Endothelial cell of umbilical vein (primary cell): ENCODE measurements at regions of chr1 and their contacts with region 1.

Region 1: DNA sequence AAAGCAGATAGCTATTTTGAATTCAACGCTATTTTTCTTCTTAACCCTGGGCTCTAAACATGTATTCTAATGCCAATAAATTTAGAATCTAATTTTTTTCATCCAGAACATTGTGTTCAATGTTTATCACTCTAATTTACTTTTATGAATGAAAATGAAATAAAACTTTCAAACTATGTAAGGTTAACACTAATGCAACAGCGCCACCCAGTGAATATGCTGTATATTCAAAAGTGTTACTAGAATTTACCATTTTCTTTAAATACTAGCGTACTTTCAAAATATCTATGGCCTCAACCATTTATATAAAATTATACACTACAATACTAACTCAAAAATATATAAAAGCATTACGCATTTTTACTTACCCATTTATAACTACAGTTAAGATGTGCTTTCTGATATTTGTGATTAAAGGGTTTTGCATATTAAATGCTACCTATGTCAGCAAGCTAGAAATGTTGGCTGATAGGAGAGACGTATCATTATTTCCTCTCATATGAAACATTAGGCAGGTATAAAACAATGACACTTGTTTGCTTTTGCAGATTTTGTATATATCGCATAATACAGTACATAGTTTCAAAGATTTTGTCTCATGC is 5.9 kb upstream of the NUF2 start:
- DNase-seq: peak; percentile 63
- H3K4me3 ChIP-seq: no peak overlapping the region
- H3K27ac ChIP-seq: no peak overlapping the region
- H3K4me1 ChIP-seq: peaks cover 6% of the 10 kb centered on the region
- H3K27me3 ChIP-seq: no peaks in the 10 kb centered on the region
- CTCF ChIP-seq: peak; percentile 15 to 28
- POLR2A ChIP-seq: no peak

Region 2: DNA sequence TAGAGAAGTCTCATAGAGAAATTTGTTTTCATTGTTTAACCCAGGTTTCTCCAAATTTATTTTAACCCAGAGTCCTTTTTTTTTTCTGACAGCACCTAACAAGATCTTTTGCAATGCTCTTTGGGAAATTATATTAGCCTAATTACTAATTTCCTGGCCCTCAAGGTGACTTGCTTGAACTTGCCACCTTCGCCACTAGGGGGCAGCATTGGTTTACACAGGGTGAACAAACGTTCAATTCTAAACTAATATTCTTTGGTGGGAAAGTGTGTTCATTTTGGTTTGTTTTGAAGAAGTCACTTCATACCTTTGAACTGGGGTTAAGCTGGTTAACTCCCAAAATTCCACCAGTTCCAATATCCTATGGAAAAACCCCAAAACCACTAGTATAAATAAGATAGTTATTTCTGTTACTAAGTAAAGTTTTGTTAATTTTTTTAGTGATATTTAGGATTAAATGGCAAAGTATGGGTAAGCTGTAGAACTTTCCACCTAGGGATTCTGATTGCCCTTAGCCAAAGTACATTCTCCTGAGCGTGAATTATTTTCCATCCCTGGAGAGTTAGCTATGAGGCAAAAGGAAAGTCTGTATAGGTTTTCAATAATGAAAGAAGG is 467.9 kb before region 1 on chr1:
- CTCF ChIA-PET with region 1: interaction called, 129 read pairs
- POLR2A ChIA-PET with region 1: no interaction called
- dilution Hi-C with region 1: no loop called
- intact Hi-C with region 1: loop called (anchors 1 kb)
- DNase-seq: peak; percentile 78
- H3K4me3 ChIP-seq: no peak overlapping the region
- H3K27ac ChIP-seq: no peak overlapping the region
- H3K4me1 ChIP-seq: no peaks in the 10 kb centered on the region
- H3K27me3 ChIP-seq: no peaks in the 10 kb centered on the region
- CTCF ChIP-seq: peak; percentile 78 to 82
- POLR2A ChIP-seq: no peak

Region 3: GRCh38 chr1:162878000-162878596 is 437.8 kb before region 1 on chr1:
- CTCF ChIA-PET with region 1: interaction called, 102 read pairs
- POLR2A ChIA-PET with region 1: no interaction called
- dilution Hi-C with region 1: no loop called
- intact Hi-C with region 1: loop called (anchors 1 kb)
- DNase-seq: peak; percentile 85
- H3K4me3 ChIP-seq: no peak overlapping the region
- H3K27ac ChIP-seq: no peak overlapping the region
- H3K4me1 ChIP-seq: peaks cover 24% of the 10 kb centered on the region
- H3K27me3 ChIP-seq: no peaks in the 10 kb centered on the region
- CTCF ChIP-seq: peak; percentile 71 to 80
- POLR2A ChIP-seq: no peak

Region 4: DNA sequence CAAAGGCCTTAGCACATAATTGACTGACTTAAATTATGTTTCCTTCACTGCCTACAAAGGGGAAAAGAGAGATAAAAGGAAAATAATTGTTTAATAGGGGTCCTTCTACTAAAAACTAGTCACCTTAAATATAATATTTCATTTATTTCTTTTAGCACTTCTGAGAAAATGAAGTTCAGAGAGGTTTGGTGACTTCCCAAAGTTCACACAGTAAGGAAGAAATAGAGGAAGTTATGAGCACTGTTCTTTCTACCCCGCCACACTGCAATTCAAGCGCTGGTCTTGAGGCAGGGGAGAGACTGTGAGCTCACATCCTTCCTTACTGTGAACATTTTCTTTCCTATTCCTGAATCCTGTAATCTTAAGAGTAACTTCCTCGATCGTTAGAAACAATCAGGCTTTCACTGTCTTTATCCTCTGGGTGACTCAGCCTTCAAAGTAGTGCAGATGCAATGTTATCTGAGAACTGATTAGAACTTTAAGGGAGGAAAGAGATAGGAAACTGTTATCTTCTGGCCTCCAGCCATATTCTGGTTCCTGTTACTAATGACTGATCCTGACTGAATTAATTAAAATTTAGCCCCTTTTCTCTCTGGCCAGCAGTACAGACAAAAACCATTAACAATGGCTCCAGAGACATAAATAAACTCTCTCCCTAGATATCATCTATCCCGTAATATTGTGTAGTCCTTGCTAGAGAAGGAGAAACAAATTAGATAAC is 120.0 kb before region 1 on chr1:
- CTCF ChIA-PET with region 1: interaction called, 15 read pairs
- POLR2A ChIA-PET with region 1: no interaction called
- dilution Hi-C with region 1: no loop called
- intact Hi-C with region 1: loop called (anchors 2 kb)
- DNase-seq: peak; percentile 97
- H3K4me3 ChIP-seq: no peak overlapping the region
- H3K27ac ChIP-seq: peak overlapping the region; percentile 79
- H3K4me1 ChIP-seq: peaks cover 53% of the 10 kb centered on the region
- H3K27me3 ChIP-seq: no peaks in the 10 kb centered on the region
- CTCF ChIP-seq: no peak
- POLR2A ChIP-seq: peak; percentile 48

Region 5: GRCh38 chr1:163263818-163264217 is 52.1 kb before region 1 on chr1:
- CTCF ChIA-PET with region 1: no interaction called
- POLR2A ChIA-PET with region 1: no interaction called
- dilution Hi-C with region 1: no loop called
- intact Hi-C with region 1: no loop called
- DNase-seq: no peak
- H3K4me3 ChIP-seq: no peak overlapping the region
- H3K27ac ChIP-seq: no peak overlapping the region
- H3K4me1 ChIP-seq: no peaks in the 10 kb centered on the region
- H3K27me3 ChIP-seq: no peaks in the 10 kb centered on the region
- CTCF ChIP-seq: no peak
- POLR2A ChIP-seq: no peak

Region 6: DNA sequence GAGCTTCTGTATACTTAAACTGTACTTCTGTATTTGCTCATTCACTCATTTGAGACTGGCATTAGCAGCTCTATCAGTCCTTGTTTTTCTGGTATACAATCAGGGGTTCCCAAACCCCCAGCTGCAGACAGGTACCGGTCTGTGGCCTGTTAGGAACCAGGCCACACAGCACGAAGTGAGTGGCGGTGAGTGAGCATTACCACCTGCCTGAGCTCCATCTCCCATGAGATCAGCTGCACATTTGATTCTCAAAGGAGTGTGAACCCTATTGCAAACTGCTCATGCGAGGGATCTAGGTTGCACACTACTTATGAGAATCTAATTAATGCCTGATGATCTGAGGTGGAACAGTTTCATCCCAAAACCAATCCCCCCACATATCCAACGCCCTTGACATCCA is 12.3 kb before region 1 on chr1:
- CTCF ChIA-PET with region 1: interaction called, 13 read pairs
- POLR2A ChIA-PET with region 1: no interaction called
- dilution Hi-C with region 1: no loop called
- intact Hi-C with region 1: no loop called
- DNase-seq: no peak
- H3K4me3 ChIP-seq: no peak overlapping the region
- H3K27ac ChIP-seq: no peak overlapping the region
- H3K4me1 ChIP-seq: no peaks in the 10 kb centered on the region
- H3K27me3 ChIP-seq: no peaks in the 10 kb centered on the region
- CTCF ChIP-seq: no peak
- POLR2A ChIP-seq: no peak

Region 7: DNA sequence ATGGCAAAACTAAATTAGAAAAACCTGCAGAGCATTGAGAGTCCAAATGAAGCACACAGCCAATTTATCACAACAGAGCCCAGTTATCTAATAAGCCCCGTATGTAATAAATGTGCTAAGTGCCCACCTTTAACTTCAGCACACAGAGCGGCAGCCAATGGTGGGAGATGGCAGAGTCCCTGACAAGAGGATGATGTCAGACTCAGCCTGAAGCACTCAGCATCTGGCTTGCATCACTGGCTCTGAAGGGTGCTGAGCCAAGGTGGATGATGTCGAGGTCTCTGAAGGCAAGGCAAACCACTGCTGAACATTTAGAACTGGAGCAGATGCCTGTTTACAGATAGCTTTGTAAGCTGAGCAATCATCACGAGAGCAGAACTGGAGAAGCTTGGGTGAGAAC is 124.2 kb after region 1 on chr1:
- CTCF ChIA-PET with region 1: no interaction called
- POLR2A ChIA-PET with region 1: no interaction called
- dilution Hi-C with region 1: no loop called
- intact Hi-C with region 1: no loop called
- DNase-seq: no peak
- H3K4me3 ChIP-seq: no peak overlapping the region
- H3K27ac ChIP-seq: no peak overlapping the region
- H3K4me1 ChIP-seq: no peaks in the 10 kb centered on the region
- H3K27me3 ChIP-seq: no peaks in the 10 kb centered on the region
- CTCF ChIP-seq: no peak
- POLR2A ChIP-seq: no peak